ENCODE measurements at regions of chr3 and their contacts with region 1.

Region 1: GRCh38 chr3:101976473-101976872 is 127.2 kb downstream of the NFKBIZ start:
- DNase-seq: peak; percentile 74
- ATAC-seq: peak; percentile 96
- H3K4me3 ChIP-seq: no peak overlapping the region
- H3K27ac ChIP-seq: peak overlapping the region; percentile 4; the same call in 1 of the 2 replicates
- H3K4me1 ChIP-seq: peaks cover 14% of the 10 kb centered on the region; the same call in 1 of the 2 replicates
- H3K27me3 ChIP-seq: no peaks in the 10 kb centered on the region
- CTCF ChIP-seq: no peak
- EP300 ChIP-seq: peak; percentile 14 to 66; a peak in 3 of 4 replicates
- POLR2A ChIP-seq: no peak
- RAD21 ChIP-seq: no peak

Region 2: DNA sequence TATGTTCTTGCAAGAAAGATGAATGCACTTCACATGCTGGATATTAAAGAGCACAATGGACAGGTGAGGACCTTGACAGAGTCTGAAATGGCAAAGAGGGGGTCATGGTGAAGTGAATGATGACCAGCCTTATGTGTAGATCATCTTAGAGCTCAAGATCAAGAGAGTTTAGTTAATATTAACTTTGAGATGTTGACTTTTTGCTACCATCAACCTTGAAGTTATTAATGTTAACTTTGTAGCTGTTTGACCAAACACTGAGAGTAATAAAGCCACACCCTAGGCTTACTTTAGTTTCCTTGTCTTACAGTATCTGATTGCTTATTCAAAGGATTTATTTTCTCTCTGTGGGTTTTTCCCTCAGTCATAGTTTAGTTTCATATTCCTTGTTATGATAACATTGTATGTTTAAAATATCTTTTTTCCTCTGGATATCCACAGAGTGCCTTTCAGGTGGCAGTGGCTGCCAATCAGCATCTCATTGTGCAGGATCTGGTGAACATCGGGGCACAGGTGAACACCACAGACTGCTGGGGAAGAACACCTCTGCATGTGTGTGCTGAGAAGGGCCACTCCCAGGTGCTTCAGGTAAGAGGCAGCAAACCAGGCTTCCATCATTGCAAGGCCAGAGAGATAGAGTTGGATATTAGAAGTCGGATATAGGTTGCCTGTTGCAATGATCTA is 121.7 kb before region 1 on chr3:
- CTCF ChIA-PET with region 1: no interaction called
- POLR2A ChIA-PET with region 1: no interaction called
- RAD21 ChIA-PET with region 1: interaction called, 6 read pairs
- SMC1A ChIA-PET with region 1: interaction called, 11 read pairs
- in situ Hi-C with region 1: no loop called
- intact Hi-C with region 1: no loop called
- DNase-seq: no peak
- ATAC-seq: no peak
- H3K4me3 ChIP-seq: no peak overlapping the region
- H3K27ac ChIP-seq: no peak overlapping the region
- H3K4me1 ChIP-seq: peaks cover 17% of the 10 kb centered on the region
- H3K27me3 ChIP-seq: no peaks in the 10 kb centered on the region
- CTCF ChIP-seq: no peak
- EP300 ChIP-seq: no peak
- POLR2A ChIP-seq: no peak
- RAD21 ChIP-seq: no peak

Region 3: DNA sequence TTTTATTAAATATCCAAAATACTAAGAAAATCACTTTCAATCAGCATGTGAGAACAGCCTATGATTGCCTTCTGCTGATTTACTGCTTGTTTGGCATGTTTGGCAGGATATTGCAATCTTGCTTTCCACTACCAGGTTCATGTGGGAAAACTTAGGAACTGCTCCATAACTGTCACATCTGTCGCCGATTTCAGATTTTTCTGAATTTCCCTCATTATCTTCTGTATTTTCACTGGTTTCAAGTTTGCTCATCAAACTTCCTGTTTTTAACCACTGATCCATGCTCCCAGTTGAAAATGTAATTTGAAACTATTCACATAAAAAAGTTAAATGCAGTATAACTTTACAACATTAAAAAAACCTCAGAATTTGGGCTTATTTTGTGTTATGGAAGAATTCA is 34.1 kb before region 1 on chr3:
- CTCF ChIA-PET with region 1: interaction called, 3 read pairs
- POLR2A ChIA-PET with region 1: no interaction called
- RAD21 ChIA-PET with region 1: interaction called, 9 read pairs
- SMC1A ChIA-PET with region 1: interaction called, 3 read pairs
- in situ Hi-C with region 1: no loop called
- intact Hi-C with region 1: loop called (anchors 2 kb)
- DNase-seq: no peak
- ATAC-seq: peak; percentile 1; the same call in 2 of the 3 replicates
- H3K4me3 ChIP-seq: no peak overlapping the region
- H3K27ac ChIP-seq: peak overlapping the region; percentile 23; the same call in 1 of the 2 replicates
- H3K4me1 ChIP-seq: peaks cover 48% of the 10 kb centered on the region
- H3K27me3 ChIP-seq: no peaks in the 10 kb centered on the region
- CTCF ChIP-seq: no peak
- EP300 ChIP-seq: peak; percentile 72 to 78; a peak in 3 of 4 replicates
- POLR2A ChIP-seq: no peak
- RAD21 ChIP-seq: no peak

Region 4: GRCh38 chr3:101950510-101950909 is 26.0 kb before region 1 on chr3:
- CTCF ChIA-PET with region 1: no interaction called
- POLR2A ChIA-PET with region 1: no interaction called
- RAD21 ChIA-PET with region 1: interaction called, 13 read pairs
- SMC1A ChIA-PET with region 1: interaction called, 9 read pairs
- in situ Hi-C with region 1: no loop called
- intact Hi-C with region 1: no loop called
- DNase-seq: peak; percentile 87
- ATAC-seq: peak; percentile 92
- H3K4me3 ChIP-seq: no peak overlapping the region
- H3K27ac ChIP-seq: no peak overlapping the region
- H3K4me1 ChIP-seq: no peaks in the 10 kb centered on the region
- H3K27me3 ChIP-seq: no peaks in the 10 kb centered on the region
- CTCF ChIP-seq: no peak
- EP300 ChIP-seq: peak in 1 of 2 experiments; percentile 49; a peak in 1 of 4 replicates
- POLR2A ChIP-seq: no peak
- RAD21 ChIP-seq: no peak

Region 5: DNA sequence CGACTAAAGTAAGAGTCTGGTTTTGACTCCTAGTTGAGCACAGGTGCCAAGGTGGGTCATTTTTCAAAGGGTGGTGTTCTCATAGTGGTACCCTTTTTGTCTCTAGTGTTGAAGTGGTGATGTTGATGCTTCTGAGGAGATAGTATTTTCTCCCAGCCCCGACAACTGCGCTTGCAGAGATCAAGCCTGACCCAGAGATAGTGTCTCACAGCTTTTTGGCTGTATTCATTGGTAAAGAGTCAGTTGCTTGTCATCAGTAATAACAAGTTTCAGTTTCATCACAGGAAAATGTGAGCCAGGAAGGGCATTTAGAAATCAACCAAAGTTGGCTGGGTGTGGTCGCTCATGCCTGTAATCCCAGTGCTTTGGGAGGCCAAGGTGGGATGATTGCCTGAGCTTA is 12.1 kb after region 1 on chr3:
- CTCF ChIA-PET with region 1: interaction called, 6 read pairs
- POLR2A ChIA-PET with region 1: no interaction called
- RAD21 ChIA-PET with region 1: interaction called, 17 read pairs
- SMC1A ChIA-PET with region 1: interaction called, 16 read pairs
- in situ Hi-C with region 1: no loop called
- intact Hi-C with region 1: no loop called
- DNase-seq: no peak
- ATAC-seq: peak; percentile 65
- H3K4me3 ChIP-seq: no peak overlapping the region
- H3K27ac ChIP-seq: peak overlapping the region; percentile 59
- H3K4me1 ChIP-seq: peaks cover 28% of the 10 kb centered on the region
- H3K27me3 ChIP-seq: no peaks in the 10 kb centered on the region
- CTCF ChIP-seq: no peak
- EP300 ChIP-seq: 0 out of 4 replicates have a peak, but pooled peaks of 1 of the 2 experiments have one; percentile 30
- POLR2A ChIP-seq: no peak
- RAD21 ChIP-seq: no peak